Activated CD4-positive, alpha-beta memory T cell treated with anti-CD3 and anti-CD28 coated beads for 36 hours (primary cell): ENCODE measurements at regions of chr1 and their contacts with region 1.

Region 1: GRCh38 chr1:26321315-26322041 is 3.7 kb downstream of the CD52 start:
- DNase-seq: peak; percentile 97
- H3K4me3 Mint-ChIP-seq: peak overlapping the region; percentile 77
- H3K27ac Mint-ChIP-seq: peak overlapping the region; percentile 91
- H3K4me1 Mint-ChIP-seq: peaks cover 34% of the 10 kb centered on the region
- H3K27me3 Mint-ChIP-seq: no peaks in the 10 kb centered on the region

Region 2: GRCh38 chr1:26169669-26170471 is 151.6 kb before region 1 on chr1 and contains the start of gene ZNF593:
- CTCF ChIA-PET with region 1: interaction called, 26 read pairs
- POLR2A ChIA-PET with region 1: no interaction called
- intact Hi-C with region 1: loop called (anchors 5 kb)
- DNase-seq: peak; percentile 94
- H3K4me3 Mint-ChIP-seq: peak within 1 kb of the TSS; percentile 83
- H3K27ac Mint-ChIP-seq: peak within 1 kb of the TSS; percentile 72
- H3K4me1 Mint-ChIP-seq: peaks cover 17% of the 10 kb centered on the region
- H3K27me3 Mint-ChIP-seq: no peaks in the 10 kb centered on the region
- total RNA-seq, gene ZNF593: 37.4 to 38.0 TPM

Region 3: GRCh38 chr1:26284597-26285360 is 36.7 kb before region 1 on chr1:
- CTCF ChIA-PET with region 1: interaction called, 886 read pairs
- POLR2A ChIA-PET with region 1: interaction called, 100 read pairs
- intact Hi-C with region 1: loop called (anchors 1 kb)
- DNase-seq: peak; percentile 98
- H3K4me3 Mint-ChIP-seq: peak overlapping the region; percentile 68
- H3K27ac Mint-ChIP-seq: peak overlapping the region; percentile 98
- H3K4me1 Mint-ChIP-seq: peaks cover 90% of the 10 kb centered on the region
- H3K27me3 Mint-ChIP-seq: no peaks in the 10 kb centered on the region

Region 4: DNA sequence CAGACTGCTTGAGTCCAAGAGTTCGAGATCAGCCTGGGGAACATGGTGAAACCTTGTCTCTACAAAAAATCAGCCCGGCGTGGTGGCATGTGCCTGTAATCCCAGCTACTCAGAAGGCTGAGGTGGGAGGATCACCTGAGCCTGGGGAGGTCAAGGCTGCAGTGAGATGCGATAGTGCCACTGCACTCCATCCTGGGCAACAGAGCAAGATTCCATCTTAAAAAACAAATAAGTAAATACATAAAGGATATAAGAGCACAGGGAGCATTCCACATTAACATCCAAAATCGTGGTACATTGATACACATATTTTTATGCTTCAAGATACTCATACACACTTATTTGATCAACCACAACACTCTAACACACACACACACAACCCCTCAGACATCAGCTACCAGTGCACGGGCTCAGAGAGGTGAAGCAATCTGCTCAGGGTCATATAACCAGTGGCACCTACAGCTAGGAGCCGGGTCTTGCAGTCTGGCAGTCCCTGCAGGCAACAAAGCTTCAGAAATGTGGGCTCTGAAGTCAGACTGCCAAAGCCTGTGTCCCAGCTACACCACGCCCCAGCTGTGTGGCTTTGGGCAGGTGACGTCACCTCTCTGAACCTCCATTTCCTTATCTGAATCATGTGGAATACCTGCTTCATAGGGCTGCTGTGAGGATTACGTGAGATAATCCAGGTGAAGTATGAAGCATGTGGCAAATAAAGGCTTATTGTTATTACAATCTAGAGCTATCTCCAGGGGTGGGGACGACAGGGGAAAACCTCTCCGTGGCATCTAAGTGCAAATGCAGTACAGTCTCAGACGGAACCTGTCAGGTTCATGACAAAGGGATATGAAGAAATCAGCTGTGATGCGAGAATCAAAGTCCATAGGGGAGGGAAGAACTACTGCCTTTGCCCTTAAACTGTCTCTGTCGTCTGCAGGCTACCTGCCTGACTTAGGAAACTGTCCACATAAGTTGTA is 37.2 kb after region 1 on chr1:
- CTCF ChIA-PET with region 1: interaction called, 14 read pairs
- POLR2A ChIA-PET with region 1: no interaction called
- intact Hi-C with region 1: loop called (anchors 2 kb)
- DNase-seq: peak; percentile 85
- H3K4me3 Mint-ChIP-seq: peak overlapping the region; percentile 6
- H3K27ac Mint-ChIP-seq: no peak overlapping the region
- H3K4me1 Mint-ChIP-seq: peaks cover 40% of the 10 kb centered on the region
- H3K27me3 Mint-ChIP-seq: peaks cover 7% of the 10 kb centered on the region

Region 5: DNA sequence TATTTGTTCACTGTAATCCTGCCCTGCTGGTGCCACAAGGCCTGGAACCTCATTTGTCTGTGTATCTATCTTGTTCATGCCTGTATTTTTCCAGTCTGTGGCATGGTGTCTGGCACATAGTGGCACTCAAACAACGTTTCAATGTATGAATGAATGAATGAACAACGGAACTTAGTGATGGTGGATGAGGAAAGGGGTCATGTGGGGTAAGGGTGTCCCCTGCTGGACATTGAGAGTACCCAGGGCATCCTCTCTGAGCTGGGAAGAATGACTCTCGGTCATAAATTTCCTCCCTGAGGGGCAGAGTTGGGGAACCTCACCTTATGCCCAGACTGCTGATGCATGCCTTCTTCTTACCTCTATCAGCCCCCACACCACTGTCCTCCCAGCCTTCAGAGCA is 70.0 kb after region 1 on chr1:
- CTCF ChIA-PET with region 1: interaction called, 7 read pairs
- POLR2A ChIA-PET with region 1: no interaction called
- intact Hi-C with region 1: loop called (anchors 2 kb)
- DNase-seq: peak; percentile 64
- H3K4me3 Mint-ChIP-seq: no peak overlapping the region
- H3K27ac Mint-ChIP-seq: peak overlapping the region; percentile 9
- H3K4me1 Mint-ChIP-seq: peaks cover 34% of the 10 kb centered on the region
- H3K27me3 Mint-ChIP-seq: no peaks in the 10 kb centered on the region